Transverse colon (tissue), 4 donors: ENCODE measurements at regions of chr6 and their contacts with region 1.

Region 1: DNA sequence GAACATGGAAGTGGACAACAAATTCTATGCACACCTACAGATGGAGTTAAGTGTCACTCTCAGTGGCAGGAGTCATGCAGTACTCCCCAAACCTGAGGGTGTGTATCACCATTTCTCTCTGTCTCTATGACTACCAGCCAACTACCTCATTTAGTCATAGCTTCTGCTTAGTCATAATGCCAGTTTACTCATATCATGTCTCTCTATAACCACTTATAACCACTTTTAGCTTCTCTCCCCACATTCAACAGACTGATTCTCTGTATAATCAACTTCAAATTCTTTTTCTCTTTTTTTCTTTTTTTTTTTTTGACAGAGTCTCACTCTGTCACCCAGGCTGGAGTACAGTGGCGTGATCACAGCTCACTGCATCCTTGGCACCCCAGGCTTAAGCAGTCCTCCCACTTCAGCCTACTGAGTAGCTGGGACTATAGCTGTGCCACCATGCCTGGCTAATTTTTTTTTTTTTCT is 13.8 kb upstream of the GTF3C6 start:
- DNase-seq: no peak
- H3K4me3 ChIP-seq: no peak overlapping the region
- H3K27ac ChIP-seq: no peak overlapping the region
- H3K4me1 ChIP-seq: peaks cover 0 to 4% (median 0%) of the 10 kb centered on the region in 4 donors
- H3K27me3 ChIP-seq: no peaks in the 10 kb centered on the region
- CTCF ChIP-seq: no peak
- EP300 ChIP-seq: no peak
- POLR2A ChIP-seq: no peak

Region 2: GRCh38 chr6:110528101-110528929 is 416.4 kb before region 1 on chr6:
- in situ Hi-C with region 1: loop called in 3 of 4 experiments (anchors 10 to 25 kb)
- intact Hi-C with region 1: no loop called
- DNase-seq: peak; percentile 29
- H3K4me3 ChIP-seq: no peak overlapping the region
- H3K27ac ChIP-seq: no peak overlapping the region
- H3K4me1 ChIP-seq: peaks cover 0 to 9% (median 0%) of the 10 kb centered on the region in 4 donors
- H3K27me3 ChIP-seq: no peaks in the 10 kb centered on the region
- CTCF ChIP-seq: peak; percentile 69 to 81 (median 73)
- EP300 ChIP-seq: no peak
- POLR2A ChIP-seq: no peak

Region 3: DNA sequence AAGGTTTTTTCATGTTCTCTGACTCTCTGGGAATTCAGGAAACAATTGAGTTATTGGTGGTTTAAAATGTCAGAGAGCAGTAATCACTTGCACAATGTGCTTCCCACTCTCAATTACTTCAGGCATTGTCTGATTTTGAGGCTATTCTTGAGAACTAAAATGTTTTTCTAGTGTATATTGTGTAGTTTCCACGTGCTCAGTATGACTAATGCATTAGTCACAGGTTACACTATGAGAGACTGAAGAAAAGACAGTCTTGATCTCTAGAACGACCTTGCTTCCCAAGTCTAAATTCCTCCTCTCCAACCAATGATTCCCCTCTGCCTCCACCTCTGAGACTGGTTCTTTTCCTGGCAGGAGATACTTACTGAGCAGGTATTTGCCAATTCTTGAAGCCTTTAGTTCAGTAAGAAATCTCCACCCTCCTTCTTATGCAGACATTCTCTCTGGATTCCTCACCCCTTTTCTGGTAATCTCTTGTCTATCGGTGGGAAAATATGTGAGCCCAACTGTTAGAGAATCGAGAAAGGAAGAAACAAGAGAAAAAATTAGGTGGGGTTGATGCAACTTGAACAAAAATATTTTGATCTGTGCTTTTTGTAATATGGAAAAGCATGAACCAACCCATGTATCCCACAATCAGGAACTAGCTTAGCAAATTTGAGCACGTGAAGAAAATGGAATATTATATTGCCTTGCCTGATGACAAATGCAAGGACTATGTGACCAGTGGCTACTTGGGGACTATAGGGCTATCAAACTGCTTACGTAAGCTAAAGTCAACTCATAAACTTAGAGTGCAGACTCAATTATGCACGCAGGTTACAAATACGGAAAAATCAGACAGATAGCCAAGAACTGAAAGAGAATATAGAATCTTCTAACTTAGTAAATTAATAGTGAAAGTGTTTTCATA is 407.2 kb before region 1 on chr6:
- in situ Hi-C with region 1: loop called in 3 of 4 experiments (anchors 10 to 25 kb)
- intact Hi-C with region 1: no loop called
- DNase-seq: no peak
- H3K4me3 ChIP-seq: no peak overlapping the region
- H3K27ac ChIP-seq: peak overlapping the region in 3 of 4 donors; percentile 15 to 55 (median 52)
- H3K4me1 ChIP-seq: peaks cover 0 to 17% (median 2%) of the 10 kb centered on the region in 4 donors
- H3K27me3 ChIP-seq: no peaks in the 10 kb centered on the region
- CTCF ChIP-seq: no peak
- EP300 ChIP-seq: no peak
- POLR2A ChIP-seq: no peak

Region 4: GRCh38 chr6:110799189-110799588 is 145.5 kb before region 1 on chr6:
- in situ Hi-C with region 1: no loop called
- intact Hi-C with region 1: no loop called
- DNase-seq: no peak
- H3K4me3 ChIP-seq: no peak overlapping the region
- H3K27ac ChIP-seq: no peak overlapping the region
- H3K4me1 ChIP-seq: peaks cover 0 to 8% (median 0%) of the 10 kb centered on the region in 4 donors
- H3K27me3 ChIP-seq: no peaks in the 10 kb centered on the region
- CTCF ChIP-seq: no peak
- EP300 ChIP-seq: no peak
- POLR2A ChIP-seq: no peak

Region 5: GRCh38 chr6:111242452-111242851 is 297.7 kb after region 1 on chr6:
- in situ Hi-C with region 1: no loop called
- intact Hi-C with region 1: no loop called
- DNase-seq: no peak
- H3K4me3 ChIP-seq: no peak overlapping the region
- H3K27ac ChIP-seq: no peak overlapping the region
- H3K4me1 ChIP-seq: no peaks in the 10 kb centered on the region
- H3K27me3 ChIP-seq: no peaks in the 10 kb centered on the region
- CTCF ChIP-seq: no peak
- EP300 ChIP-seq: no peak
- POLR2A ChIP-seq: no peak